Testis (tissue), 5 donors: ENCODE measurements at regions of chr11 and their contacts with region 1.

Region 1: GRCh38 chr11:78416305-78417178 is 1.1 kb downstream of the GAB2 start:
- DNase-seq: peak; percentile 81
- H3K4me3 ChIP-seq: peak overlapping the region; percentile 81 to 86
- H3K27ac ChIP-seq: peak overlapping the region; percentile 89 to 94
- H3K4me1 ChIP-seq: peaks cover 5% of the 10 kb centered on the region
- H3K27me3 ChIP-seq: no peaks in the 10 kb centered on the region
- CTCF ChIP-seq: peak; percentile 11 to 59 (median 34)
- POLR2A ChIP-seq: no peak

Region 2: DNA sequence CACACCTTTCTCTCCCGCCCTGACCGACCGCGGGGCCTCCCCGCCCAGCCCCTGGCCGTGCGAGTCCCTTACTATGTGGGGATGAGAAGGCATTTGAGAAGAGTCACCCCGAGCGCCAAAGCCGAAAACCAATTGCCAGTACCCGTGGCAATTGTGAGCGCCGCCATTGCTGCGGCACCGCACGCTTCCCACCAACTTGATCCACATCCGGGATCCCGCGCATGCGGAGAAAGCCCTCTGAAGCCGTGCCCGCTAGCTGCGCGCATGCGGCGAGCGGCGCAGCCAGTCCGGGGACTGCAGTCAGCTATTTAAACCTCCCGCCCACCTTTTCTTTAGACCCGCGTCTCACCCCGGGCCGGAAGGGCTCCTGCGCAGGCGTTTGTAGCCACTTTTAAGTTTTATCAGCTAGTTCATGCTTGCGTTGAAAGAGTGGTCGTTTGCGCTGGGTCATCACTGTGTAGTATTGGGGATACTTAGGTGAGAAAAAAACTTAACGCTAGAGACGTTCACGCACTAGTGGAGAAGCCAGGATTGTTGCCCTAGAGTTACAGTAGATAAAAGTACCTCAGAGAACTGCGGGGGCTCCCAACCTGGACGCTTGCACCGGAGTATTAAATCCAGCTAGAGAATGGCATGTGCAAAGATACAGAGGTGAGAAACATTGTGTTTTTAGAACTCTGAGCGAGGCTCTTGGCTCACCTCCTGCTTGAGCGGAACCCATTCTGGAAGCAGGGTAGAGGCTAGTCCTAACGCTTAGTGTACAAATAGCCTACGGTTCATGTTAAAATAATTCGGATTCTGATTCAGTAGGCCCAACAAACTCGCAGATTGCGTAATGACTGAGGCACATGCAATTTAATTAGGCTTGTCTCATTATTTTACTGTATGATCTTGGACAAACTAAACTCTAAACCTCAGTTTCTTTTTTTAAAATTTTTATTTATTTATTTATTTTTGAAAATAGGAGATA is 276.8 kb before region 1 on chr11 and contains the start of gene ALG8:
- intact Hi-C with region 1: no loop called
- DNase-seq: peak; percentile 96
- H3K4me3 ChIP-seq: peak within 1 kb of the TSS; percentile 69 to 84
- H3K27ac ChIP-seq: peak within 1 kb of the TSS; percentile 31 to 68
- H3K4me1 ChIP-seq: peaks cover 9% of the 10 kb centered on the region
- H3K27me3 ChIP-seq: no peaks in the 10 kb centered on the region
- CTCF ChIP-seq: no peak
- POLR2A ChIP-seq: no peak
- total RNA-seq, gene ALG8: 61.2 to 61.5 TPM

Region 3: DNA sequence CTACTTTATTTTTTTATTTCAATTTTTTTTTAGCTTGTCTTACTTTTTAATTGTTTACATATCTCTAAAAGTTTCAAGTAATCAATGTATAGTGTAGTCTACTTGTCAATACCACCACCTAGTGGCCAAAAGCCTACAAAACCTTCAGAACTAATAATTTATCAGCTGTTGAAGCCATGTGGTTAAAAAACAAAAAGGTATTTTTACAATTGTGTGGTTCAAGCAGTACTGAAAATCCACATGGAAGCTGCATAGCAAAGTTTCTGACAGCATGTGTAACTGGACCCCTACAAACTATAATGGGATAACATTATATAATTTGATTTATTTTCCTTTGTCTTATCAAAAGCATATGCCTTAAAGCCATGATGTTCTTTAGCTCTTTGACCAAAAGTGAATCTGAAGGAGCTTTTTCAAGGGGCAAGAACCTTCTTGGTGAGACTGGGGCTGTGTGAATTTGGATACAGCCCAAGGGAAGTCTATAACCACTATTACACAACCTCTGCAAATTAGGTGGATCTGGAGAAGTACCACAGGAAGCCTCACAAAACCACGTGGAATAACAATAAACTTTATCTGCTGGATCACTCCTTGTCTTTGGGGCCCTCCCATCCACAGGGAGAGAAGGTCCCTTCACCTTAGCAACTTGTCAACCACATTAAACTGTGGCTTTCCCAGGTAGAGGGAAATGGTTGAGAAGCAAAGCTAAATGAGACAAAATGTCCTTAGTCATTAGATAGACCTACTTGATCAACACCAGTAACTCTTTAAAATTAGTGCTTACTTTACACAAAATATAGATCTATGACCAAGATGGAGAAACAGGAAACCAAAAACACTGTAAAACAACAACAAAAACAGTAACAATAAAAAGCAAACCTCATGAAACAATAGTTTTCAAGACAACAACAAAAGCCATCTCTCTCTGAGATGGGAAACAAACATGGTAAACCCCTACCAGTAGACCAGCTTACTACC is 148.2 kb after region 1 on chr11:
- intact Hi-C with region 1: loop called (anchors 10 kb)
- DNase-seq: peak; percentile 63
- H3K4me3 ChIP-seq: no peak overlapping the region
- H3K27ac ChIP-seq: no peak overlapping the region
- H3K4me1 ChIP-seq: peaks cover 18% of the 10 kb centered on the region
- H3K27me3 ChIP-seq: no peaks in the 10 kb centered on the region
- CTCF ChIP-seq: peak; percentile 61 to 79 (median 71)
- POLR2A ChIP-seq: no peak

Region 4: GRCh38 chr11:78586452-78587046 is 170.0 kb after region 1 on chr11:
- intact Hi-C with region 1: no loop called
- DNase-seq: no peak
- H3K4me3 ChIP-seq: no peak overlapping the region
- H3K27ac ChIP-seq: no peak overlapping the region
- H3K4me1 ChIP-seq: no peaks in the 10 kb centered on the region
- H3K27me3 ChIP-seq: no peaks in the 10 kb centered on the region
- CTCF ChIP-seq: peak; percentile 6 to 46 (median 42)
- POLR2A ChIP-seq: no peak